CD4-positive, alpha-beta memory T cell (primary cell): ENCODE measurements at regions of chr4 and their contacts with region 1.

Region 1: DNA sequence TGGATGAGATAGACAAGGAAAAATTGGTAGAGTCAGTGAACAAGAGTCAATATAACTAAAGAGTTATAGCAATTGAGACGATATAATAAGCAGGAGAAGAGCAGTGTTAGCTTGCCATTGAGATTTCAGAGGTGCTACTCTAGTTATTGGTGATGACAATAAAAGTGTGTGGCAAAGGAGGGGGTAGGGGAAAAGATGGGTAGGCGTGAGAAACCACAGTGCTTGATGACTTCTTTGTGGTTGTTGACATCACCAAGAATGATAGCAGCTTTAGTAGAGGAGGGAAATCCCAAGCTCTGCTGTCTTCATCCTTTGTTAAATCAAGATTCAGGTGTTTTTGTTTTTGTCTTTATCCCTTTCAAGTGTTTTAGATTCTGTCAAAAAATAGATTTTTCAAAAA is 179.9 kb upstream of the PPP3CA start:
- DNase-seq: peak; percentile 77 to 86 (median 80)
- H3K4me3 ChIP-seq: no peak overlapping the region
- H3K4me3 Mint-ChIP-seq: peak overlapping the region in 4 of 8 donors; percentile 2 to 52 (median 4)
- H3K27ac ChIP-seq: no peak overlapping the region
- H3K27ac Mint-ChIP-seq: peak overlapping the region; percentile 4 to 91 (median 49)
- H3K4me1 ChIP-seq: peaks cover 17% of the 10 kb centered on the region
- H3K4me1 Mint-ChIP-seq: peaks cover 10 to 21% (median 10%) of the 10 kb centered on the region in 4 donors
- H3K27me3 ChIP-seq: no peaks in the 10 kb centered on the region
- H3K27me3 Mint-ChIP-seq: peaks cover 2 to 3% of the 10 kb centered on the region in 2 donors

Region 2: DNA sequence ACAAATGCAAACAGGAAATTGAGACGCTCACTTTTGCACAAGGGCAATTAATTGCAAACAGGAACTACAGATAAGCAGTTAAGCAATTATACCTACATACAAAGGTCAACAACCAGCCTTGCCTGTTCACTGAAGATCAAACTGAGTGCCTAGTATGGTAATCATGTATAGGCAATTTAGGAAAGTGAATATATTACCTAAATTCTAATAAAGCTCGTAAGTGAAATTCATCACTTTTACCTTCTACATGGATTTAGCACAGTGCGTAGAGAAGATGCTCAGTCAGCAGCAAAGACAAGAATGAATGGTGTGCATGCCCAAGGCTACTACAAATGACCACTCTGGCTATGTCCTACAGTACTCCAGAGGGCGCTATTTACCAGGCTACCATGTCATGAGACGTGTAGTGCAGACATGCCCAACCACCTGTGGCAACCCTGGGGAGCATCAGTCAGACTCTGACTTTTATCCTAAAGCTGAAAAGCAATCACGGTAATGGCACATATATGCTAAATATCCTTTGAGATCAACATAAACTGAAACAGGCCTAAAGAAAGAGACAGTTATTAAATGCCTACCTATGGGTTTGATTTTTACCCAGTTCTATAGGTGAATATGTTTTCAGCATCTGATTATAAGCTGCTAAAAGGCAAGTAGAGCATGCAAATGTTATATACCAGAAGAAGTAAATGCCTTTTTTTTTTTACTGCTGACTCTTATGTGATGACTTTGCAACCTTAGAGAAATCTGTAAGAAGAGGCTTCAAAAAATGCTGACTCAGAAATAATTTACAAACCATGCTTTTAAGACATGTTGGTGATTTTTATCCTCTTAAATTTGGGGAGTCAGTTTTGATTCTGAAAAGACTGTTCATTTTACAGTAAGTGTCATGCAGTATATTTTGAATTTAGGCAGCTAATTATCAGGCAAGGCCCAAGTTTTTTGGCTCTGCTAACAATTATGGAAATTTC is 357.9 kb before region 1 on chr4:
- CTCF ChIA-PET with region 1: no interaction called
- POLR2A ChIA-PET with region 1: no interaction called
- intact Hi-C with region 1: loop called (anchors 5 kb)
- DNase-seq: peak; percentile 45 to 64 (median 54)
- H3K4me3 ChIP-seq: no peak overlapping the region
- H3K4me3 Mint-ChIP-seq: no peak overlapping the region
- H3K27ac ChIP-seq: no peak overlapping the region
- H3K27ac Mint-ChIP-seq: no peak overlapping the region
- H3K4me1 ChIP-seq: peaks cover 8% of the 10 kb centered on the region
- H3K4me1 Mint-ChIP-seq: peaks cover 4 to 13% (median 6%) of the 10 kb centered on the region in 4 donors
- H3K27me3 ChIP-seq: no peaks in the 10 kb centered on the region
- H3K27me3 Mint-ChIP-seq: no peaks in the 10 kb centered on the region

Region 3: GRCh38 chr4:101419324-101420135 is 107.7 kb before region 1 on chr4:
- CTCF ChIA-PET with region 1: no interaction called
- POLR2A ChIA-PET with region 1: interaction called, 4 read pairs
- intact Hi-C with region 1: loop called (anchors 2 kb)
- DNase-seq: no peak
- H3K4me3 ChIP-seq: no peak overlapping the region
- H3K4me3 Mint-ChIP-seq: peak overlapping the region in 2 of 8 donors; percentile 25 to 53
- H3K27ac ChIP-seq: no peak overlapping the region
- H3K27ac Mint-ChIP-seq: no peak overlapping the region
- H3K4me1 ChIP-seq: peaks cover 38% of the 10 kb centered on the region
- H3K4me1 Mint-ChIP-seq: peaks cover 29 to 42% (median 35%) of the 10 kb centered on the region in 4 donors
- H3K27me3 ChIP-seq: no peaks in the 10 kb centered on the region
- H3K27me3 Mint-ChIP-seq: peaks cover 14 to 21% of the 10 kb centered on the region in 2 donors